Gastrocnemius medialis (tissue), 4 donors: ENCODE measurements at regions of chr2 and their contacts with region 1.

Region 1: GRCh38 chr2:219119422-219120043 is 41.1 kb downstream of the NHEJ1 start:
- DNase-seq: peak; percentile 9 to 25
- ATAC-seq: peak in 1 of 2 donors; percentile 53
- H3K4me3 ChIP-seq: no peak overlapping the region
- H3K27ac ChIP-seq: no peak overlapping the region
- H3K4me1 ChIP-seq: no peaks in the 10 kb centered on the region
- H3K27me3 ChIP-seq: no peaks in the 10 kb centered on the region
- CTCF ChIP-seq: peak; percentile 40 to 80 (median 69)
- POLR2A ChIP-seq: no peak

Region 2: GRCh38 chr2:218820746-218821369 is 298.7 kb before region 1 on chr2:
- in situ Hi-C with region 1: no loop called
- intact Hi-C with region 1: no loop called
- DNase-seq: no peak
- ATAC-seq: no peak
- H3K4me3 ChIP-seq: no peak overlapping the region
- H3K27ac ChIP-seq: peak overlapping the region; percentile 95
- H3K4me1 ChIP-seq: peaks cover 10 to 54% of the 10 kb centered on the region in 2 donors
- H3K27me3 ChIP-seq: no peaks in the 10 kb centered on the region
- CTCF ChIP-seq: no peak
- POLR2A ChIP-seq: peak in 1 of 2 donors; percentile 7

Region 3: DNA sequence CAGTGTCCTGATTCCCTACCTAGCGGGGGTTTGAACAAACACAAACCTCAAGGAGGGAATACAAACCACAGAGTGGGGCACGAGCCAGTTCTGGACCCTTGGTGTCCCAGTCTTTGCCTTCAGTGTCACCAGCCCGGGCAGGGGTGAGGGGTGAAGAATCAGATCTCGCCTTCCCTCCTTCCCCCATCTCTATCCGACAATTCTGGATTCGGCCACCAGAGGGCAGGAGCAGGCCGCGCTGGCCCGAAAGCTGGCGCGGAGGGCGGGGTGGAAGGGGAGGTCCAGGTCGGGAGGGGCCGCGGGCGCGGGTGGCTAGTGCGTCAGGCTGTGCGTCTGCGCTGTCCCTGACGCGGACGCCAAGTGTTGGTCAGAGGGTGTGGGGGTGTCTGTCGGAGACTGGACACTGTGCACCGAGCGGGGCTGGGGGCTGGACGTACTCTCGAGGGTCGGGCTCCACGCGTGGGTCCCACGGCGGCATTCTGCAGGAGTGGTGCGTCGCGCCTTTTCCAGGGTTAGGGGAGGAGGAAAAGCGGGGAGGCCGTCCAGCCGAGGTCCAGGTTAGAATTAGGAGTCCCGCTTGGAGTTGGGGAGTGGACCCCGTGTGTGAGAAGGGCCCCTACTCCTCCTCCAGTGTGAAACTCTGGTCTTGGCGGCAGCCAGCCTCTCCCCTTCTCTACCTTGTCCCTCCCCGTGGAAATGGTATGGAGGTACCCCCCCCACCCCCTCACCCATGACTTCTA is 123.4 kb before region 1 on chr2:
- in situ Hi-C with region 1: no loop called
- intact Hi-C with region 1: loop called (anchors 1 kb)
- DNase-seq: peak; percentile 53 to 66
- ATAC-seq: peak; percentile 65 to 83
- H3K4me3 ChIP-seq: peak overlapping the region; percentile 39 to 53 (median 51)
- H3K27ac ChIP-seq: peak overlapping the region in 2 of 4 donors; percentile 62 to 81
- H3K4me1 ChIP-seq: peaks cover 10 to 18% of the 10 kb centered on the region in 2 donors
- H3K27me3 ChIP-seq: peaks cover 48 to 64% (median 54%) of the 10 kb centered on the region in 3 donors
- CTCF ChIP-seq: peak; percentile 59 to 96 (median 87)
- POLR2A ChIP-seq: peak; percentile 68 to 86

Region 4: GRCh38 chr2:219029829-219030165 is 89.7 kb before region 1 on chr2:
- in situ Hi-C with region 1: no loop called
- intact Hi-C with region 1: loop called (anchors 1 kb)
- DNase-seq: peak; percentile 36 to 65
- ATAC-seq: peak; percentile 83 to 87
- H3K4me3 ChIP-seq: no peak overlapping the region
- H3K27ac ChIP-seq: no peak overlapping the region
- H3K4me1 ChIP-seq: no peaks in the 10 kb centered on the region
- H3K27me3 ChIP-seq: peaks cover 0 to 12% (median 9%) of the 10 kb centered on the region in 3 donors
- CTCF ChIP-seq: peak; percentile 64 to 97 (median 90)
- POLR2A ChIP-seq: no peak

Region 5: DNA sequence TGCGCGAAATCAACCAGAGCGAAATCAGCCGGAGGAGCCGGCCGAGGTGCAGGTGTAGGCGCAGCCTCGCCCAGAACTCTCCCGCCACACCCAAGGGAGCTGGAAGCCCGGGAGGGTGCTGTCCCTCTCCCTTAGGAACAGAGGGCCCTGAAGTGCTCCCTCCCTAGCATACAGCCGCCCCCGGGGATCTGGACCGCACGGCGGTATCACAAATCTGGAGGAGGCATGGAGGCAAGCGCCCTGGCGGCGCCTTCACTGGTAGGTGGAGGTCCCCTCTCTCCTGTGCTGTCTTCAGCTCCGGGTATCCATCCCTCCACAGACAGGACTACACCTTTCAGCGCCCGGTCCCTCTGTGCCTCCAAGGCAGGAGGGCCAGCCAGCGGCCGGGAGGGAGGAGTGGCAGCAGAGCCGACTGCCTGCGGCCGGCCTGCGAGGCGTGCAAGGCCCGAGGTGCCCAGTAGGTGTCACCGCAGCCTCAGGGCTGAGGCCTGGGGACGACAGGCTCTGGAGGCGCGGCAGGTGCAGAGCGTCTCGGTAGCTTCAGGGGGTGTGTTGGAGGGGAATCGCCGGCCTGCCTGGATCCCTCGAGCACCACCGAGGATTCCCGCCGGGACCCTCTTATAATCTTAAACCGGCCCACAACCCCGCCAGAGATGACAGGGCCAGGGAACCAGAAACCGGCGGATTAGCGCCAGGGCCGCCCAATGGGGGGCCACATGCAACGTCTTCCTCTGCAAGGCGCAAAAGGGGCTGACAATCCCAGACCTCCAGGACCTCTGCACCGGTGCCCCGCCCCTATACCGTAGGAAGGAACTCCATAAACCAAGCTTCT is 61.6 kb before region 1 on chr2:
- in situ Hi-C with region 1: loop called in 3 of 4 experiments (anchors 5 to 10 kb)
- intact Hi-C with region 1: loop called (anchors 1 kb)
- DNase-seq: peak; percentile 36 to 54
- ATAC-seq: peak; percentile 73 to 81
- H3K4me3 ChIP-seq: peak overlapping the region in 2 of 4 donors; percentile 10 to 40
- H3K27ac ChIP-seq: no peak overlapping the region
- H3K4me1 ChIP-seq: peaks cover 13 to 24% of the 10 kb centered on the region in 2 donors
- H3K27me3 ChIP-seq: peaks cover 70 to 81% (median 76%) of the 10 kb centered on the region in 3 donors
- CTCF ChIP-seq: peak; percentile 88 to 98 (median 93)
- POLR2A ChIP-seq: no peak

Region 6: GRCh38 chr2:219065484-219065883 is 54.0 kb before region 1 on chr2:
- in situ Hi-C with region 1: loop called in 3 of 4 experiments (anchors 5 to 10 kb)
- intact Hi-C with region 1: no loop called
- DNase-seq: no peak
- ATAC-seq: no peak
- H3K4me3 ChIP-seq: no peak overlapping the region
- H3K27ac ChIP-seq: no peak overlapping the region
- H3K4me1 ChIP-seq: no peaks in the 10 kb centered on the region
- H3K27me3 ChIP-seq: peaks cover 26 to 37% (median 34%) of the 10 kb centered on the region in 3 donors
- CTCF ChIP-seq: no peak
- POLR2A ChIP-seq: no peak